Colonic mucosa (tissue), 4 donors: ENCODE measurements at regions of chr22 and their contacts with region 1.

Region 1: DNA sequence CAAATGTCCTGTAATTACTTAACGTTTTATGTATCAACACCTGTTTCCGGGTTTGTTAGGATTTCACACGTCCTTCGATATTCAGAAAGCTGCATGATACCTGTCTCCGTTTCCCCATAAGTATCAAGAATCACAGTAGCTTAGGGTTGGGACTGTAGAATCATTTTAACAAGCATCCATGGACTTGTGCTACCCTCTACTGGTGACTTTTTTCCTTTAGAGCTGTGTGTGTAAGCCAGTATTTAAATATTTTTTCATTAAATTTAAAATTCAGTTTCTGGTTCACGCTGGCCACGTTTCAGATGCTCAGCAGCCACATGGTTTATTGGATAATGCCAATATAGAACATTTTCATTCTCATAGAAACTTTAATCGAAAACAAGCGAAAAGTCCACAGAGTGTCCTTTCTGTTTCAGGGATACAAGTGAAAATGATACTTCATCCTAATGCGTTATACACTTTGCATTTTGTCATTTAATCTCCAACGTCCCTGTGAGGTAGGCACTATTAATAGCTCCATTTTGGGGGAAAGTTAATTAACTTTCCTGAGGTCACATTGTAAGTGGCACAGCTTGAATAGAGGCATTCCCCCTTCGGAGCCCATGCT is 61.5 kb upstream of the SLC25A18 start:
- DNase-seq: peak; percentile 29
- H3K4me3 ChIP-seq: no peak overlapping the region
- H3K27ac ChIP-seq: no peak overlapping the region
- H3K4me1 ChIP-seq: no peaks in the 10 kb centered on the region
- H3K27me3 ChIP-seq: no peaks in the 10 kb centered on the region
- CTCF ChIP-seq: peak; percentile 43

Region 2: GRCh38 chr22:17077255-17077654 is 424.5 kb before region 1 on chr22:
- intact Hi-C with region 1: loop called (anchors 2 kb)
- DNase-seq: no peak
- H3K4me3 ChIP-seq: no peak overlapping the region
- H3K27ac ChIP-seq: no peak overlapping the region
- H3K4me1 ChIP-seq: no peaks in the 10 kb centered on the region
- H3K27me3 ChIP-seq: no peaks in the 10 kb centered on the region
- CTCF ChIP-seq: no peak

Region 3: GRCh38 chr22:17171313-17172171 is 330.2 kb before region 1 on chr22:
- intact Hi-C with region 1: loop called (anchors 2 kb)
- DNase-seq: peak; percentile 91
- H3K4me3 ChIP-seq: peak overlapping the region; percentile 62
- H3K27ac ChIP-seq: peak overlapping the region; percentile 95
- H3K4me1 ChIP-seq: no peaks in the 10 kb centered on the region
- H3K27me3 ChIP-seq: no peaks in the 10 kb centered on the region
- CTCF ChIP-seq: peak; percentile 75

Region 4: DNA sequence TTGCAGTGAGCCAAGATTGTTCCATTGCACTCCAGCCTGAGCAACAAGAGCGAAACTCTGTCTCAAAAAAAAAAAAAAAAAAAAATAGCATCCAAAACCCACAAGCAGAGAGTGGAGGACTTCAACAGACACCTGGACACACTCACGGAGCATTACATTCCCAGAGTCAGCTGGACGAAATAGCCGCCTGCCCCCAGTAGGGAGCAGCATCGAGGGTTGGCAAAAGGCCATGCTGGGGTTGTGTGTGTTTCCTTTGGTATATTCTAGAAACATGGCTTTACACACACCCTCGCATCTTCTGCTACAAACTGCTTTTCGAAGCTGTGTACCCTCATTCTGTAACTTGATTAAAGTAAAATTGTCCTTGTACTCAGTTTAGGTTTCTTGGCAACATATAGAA is 287.8 kb before region 1 on chr22:
- intact Hi-C with region 1: loop called (anchors 5 kb)
- DNase-seq: peak; percentile 56
- H3K4me3 ChIP-seq: no peak overlapping the region
- H3K27ac ChIP-seq: no peak overlapping the region
- H3K4me1 ChIP-seq: no peaks in the 10 kb centered on the region
- H3K27me3 ChIP-seq: no peaks in the 10 kb centered on the region
- CTCF ChIP-seq: peak; percentile 40

Region 5: GRCh38 chr22:17387356-17387755 is 114.4 kb before region 1 on chr22:
- intact Hi-C with region 1: no loop called
- DNase-seq: no peak
- H3K4me3 ChIP-seq: no peak overlapping the region
- H3K27ac ChIP-seq: no peak overlapping the region
- H3K4me1 ChIP-seq: no peaks in the 10 kb centered on the region
- H3K27me3 ChIP-seq: no peaks in the 10 kb centered on the region
- CTCF ChIP-seq: no peak